Breast epithelium (tissue), 4 donors: ENCODE measurements at regions of chr10 and their contacts with region 1.

Region 1: DNA sequence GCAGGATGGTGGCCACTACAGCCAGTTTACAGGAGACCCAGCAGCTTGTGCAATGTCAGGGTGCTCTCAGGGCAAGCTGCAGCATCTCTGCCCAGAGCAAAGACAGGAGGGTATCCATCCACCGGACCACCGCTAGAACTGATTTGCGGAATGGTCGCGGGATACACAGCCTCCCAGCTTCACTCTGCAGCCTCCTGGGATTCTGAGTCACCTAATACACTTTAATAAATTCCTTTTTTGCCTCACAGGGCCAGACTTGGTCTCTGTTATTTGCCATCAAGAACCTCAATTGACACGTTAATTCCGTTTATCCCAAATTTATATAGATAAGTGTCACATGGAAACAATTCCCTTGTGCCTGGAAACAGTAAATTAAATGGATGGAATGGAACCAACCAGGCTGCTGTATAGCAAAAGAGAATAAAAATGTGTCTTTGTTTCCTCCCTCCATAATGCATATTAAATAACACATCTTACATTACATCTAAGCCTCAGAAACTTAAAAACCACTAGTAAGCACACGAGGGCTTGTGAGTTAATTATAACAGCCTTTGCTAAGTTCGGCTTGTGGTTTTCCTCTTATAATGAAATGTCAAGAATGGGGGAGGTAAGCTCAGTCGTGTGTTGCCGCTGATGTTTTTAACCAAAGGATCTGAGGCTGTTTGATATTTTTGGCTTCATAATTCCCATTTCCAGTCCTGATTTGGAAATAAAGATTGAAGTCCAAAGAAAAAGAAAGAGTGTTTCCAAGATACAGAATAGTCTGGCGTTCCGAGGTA is 52.1 kb downstream of the ADRB1 start:
- DNase-seq: no peak
- H3K4me3 ChIP-seq: no peak overlapping the region
- H3K27ac ChIP-seq: no peak overlapping the region
- H3K4me1 ChIP-seq: no peaks in the 10 kb centered on the region
- H3K27me3 ChIP-seq: no peaks in the 10 kb centered on the region
- CTCF ChIP-seq: no peak
- POLR2A ChIP-seq: no peak

Region 2: GRCh38 chr10:112832361-112832878 is 1263.3 kb before region 1 on chr10:
- intact Hi-C with region 1: loop called (anchors 5 kb)
- DNase-seq: no peak
- H3K4me3 ChIP-seq: no peak overlapping the region
- H3K27ac ChIP-seq: no peak overlapping the region
- H3K4me1 ChIP-seq: no peaks in the 10 kb centered on the region
- H3K27me3 ChIP-seq: no peaks in the 10 kb centered on the region
- CTCF ChIP-seq: no peak
- POLR2A ChIP-seq: no peak

Region 3: DNA sequence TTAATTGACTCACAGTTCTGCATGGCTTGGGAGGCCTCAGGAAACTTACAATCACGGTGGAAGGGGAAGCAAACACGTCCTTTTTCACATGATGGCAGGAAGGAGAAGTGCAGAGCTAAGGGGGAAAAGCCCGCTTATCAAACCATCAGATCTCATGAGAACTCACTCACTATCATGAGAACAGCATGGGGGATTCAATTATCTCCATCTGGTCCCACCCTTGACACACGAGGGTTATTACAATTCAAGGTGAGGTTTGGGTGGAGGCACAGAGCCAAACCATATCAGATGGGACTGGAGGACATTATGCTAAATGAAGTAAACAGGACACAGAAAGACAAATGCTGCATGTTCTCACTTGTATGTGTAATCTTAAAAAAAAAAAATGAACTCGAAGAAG is 684.3 kb before region 1 on chr10:
- intact Hi-C with region 1: no loop called
- DNase-seq: no peak
- H3K4me3 ChIP-seq: no peak overlapping the region
- H3K27ac ChIP-seq: no peak overlapping the region
- H3K4me1 ChIP-seq: no peaks in the 10 kb centered on the region
- H3K27me3 ChIP-seq: no peaks in the 10 kb centered on the region
- CTCF ChIP-seq: no peak
- POLR2A ChIP-seq: no peak

Region 4: DNA sequence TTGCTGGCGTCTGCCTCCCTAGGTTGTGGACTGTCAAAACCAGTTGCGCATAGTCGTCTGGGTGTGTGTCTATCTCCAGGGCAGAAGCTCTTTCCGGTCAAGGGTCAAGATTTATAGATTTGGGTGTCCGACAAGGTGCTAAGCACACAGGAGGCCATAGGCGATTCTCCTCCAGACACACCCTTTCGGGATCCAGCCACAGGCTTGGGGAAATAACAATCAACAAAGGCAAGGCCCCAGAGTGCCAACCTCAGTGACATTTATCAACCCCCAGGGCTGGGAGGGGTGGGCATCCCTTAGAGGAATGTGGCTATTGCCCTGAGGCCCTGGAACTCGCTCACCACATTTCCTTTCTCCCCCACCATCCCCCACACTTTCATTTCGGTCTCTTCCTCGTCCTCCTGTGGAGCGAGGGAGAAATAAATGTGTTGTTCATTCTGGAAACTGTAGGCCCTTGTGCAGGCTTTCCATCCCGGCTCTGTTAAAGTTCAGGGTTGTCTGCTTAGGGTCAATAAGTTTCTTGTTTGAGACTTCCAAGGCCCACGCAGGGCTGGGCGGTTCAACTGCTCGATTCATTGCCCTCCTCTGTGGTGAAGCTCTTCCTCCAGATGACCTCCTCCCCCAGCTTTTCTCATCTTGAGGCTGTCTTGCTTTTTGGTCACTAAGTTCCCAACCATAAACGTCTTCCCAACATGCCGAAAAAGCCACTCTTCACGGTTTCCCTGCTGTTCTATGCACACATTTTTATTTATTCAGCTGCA is 250.7 kb after region 1 on chr10:
- intact Hi-C with region 1: no loop called
- DNase-seq: no peak
- H3K4me3 ChIP-seq: peak overlapping the region in 1 of 3 donors; percentile 37
- H3K27ac ChIP-seq: peak overlapping the region; percentile 68 to 84
- H3K4me1 ChIP-seq: peaks cover 0 to 4% of the 10 kb centered on the region in 2 donors
- H3K27me3 ChIP-seq: no peaks in the 10 kb centered on the region
- CTCF ChIP-seq: no peak
- POLR2A ChIP-seq: no peak

Region 5: DNA sequence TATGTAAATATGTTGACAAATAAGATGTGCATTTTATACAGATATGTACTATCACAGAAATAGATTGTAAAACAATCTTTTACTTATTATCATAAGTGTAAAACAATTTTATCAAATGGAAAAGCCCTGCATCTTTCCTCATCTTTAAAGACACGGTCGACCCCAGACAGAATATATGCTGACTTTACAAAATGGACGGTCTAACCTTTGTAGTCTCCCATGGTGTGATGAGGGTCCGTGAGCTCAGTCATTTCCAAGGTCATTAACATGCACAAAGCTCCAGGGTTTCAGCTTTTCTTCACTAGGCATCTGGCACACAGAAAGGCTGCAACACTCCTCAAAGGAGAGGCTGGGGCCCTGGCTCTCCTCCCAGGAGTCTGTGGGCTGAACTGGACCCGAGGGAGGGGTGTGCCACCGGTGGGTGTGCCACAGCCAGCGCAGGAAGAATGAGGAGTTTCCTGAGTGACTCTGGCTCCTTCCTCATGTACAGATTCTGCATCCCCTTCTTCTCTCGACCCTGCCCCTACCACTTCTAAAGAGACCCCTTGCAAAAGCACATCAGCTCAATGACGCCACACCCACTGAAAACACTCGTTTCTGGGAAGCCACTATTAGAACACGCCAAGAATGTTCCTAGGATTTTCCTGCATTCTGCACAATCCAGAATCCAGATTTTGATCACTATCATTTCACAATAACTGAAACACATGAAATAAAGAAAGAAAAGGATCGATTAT is 588.5 kb after region 1 on chr10:
- intact Hi-C with region 1: no loop called
- DNase-seq: peak in 1 of 2 donors; percentile 49
- H3K4me3 ChIP-seq: peak overlapping the region; percentile 28 to 60 (median 41)
- H3K27ac ChIP-seq: peak overlapping the region; percentile 82 to 90
- H3K4me1 ChIP-seq: peaks cover 0 to 11% of the 10 kb centered on the region in 2 donors
- H3K27me3 ChIP-seq: no peaks in the 10 kb centered on the region
- CTCF ChIP-seq: no peak
- POLR2A ChIP-seq: no peak